Heart left ventricle (tissue), 16 donors: ENCODE measurements at regions of chr11 and their contacts with region 1.

Region 1: GRCh38 chr11:9363954-9364912 is 20.2 kb upstream of the IPO7 start:
- DNase-seq: peak; percentile 96 to 99 (median 97)
- ATAC-seq: peak; percentile 95 to 99 (median 99)
- H3K4me3 ChIP-seq: peak overlapping the region in 10 of 12 donors; percentile 39 to 65 (median 54)
- H3K27ac ChIP-seq: peak overlapping the region; percentile 91 to 100 (median 99)
- H3K4me1 ChIP-seq: peaks cover 0 to 25% (median 13%) of the 10 kb centered on the region in 12 donors
- H3K27me3 ChIP-seq: no peaks in the 10 kb centered on the region
- CTCF ChIP-seq: peak in 2 of 12 donors; percentile 6 to 7
- POLR2A ChIP-seq: peak in 1 of 2 donors; percentile 90

Region 2: GRCh38 chr11:9293646-9294045 is 70.6 kb before region 1 on chr11:
- intact Hi-C with region 1: no loop called
- DNase-seq: no peak
- ATAC-seq: no peak
- H3K4me3 ChIP-seq: no peak overlapping the region
- H3K27ac ChIP-seq: no peak overlapping the region
- H3K4me1 ChIP-seq: no peaks in the 10 kb centered on the region
- H3K27me3 ChIP-seq: no peaks in the 10 kb centered on the region
- CTCF ChIP-seq: no peak
- POLR2A ChIP-seq: no peak

Region 3: DNA sequence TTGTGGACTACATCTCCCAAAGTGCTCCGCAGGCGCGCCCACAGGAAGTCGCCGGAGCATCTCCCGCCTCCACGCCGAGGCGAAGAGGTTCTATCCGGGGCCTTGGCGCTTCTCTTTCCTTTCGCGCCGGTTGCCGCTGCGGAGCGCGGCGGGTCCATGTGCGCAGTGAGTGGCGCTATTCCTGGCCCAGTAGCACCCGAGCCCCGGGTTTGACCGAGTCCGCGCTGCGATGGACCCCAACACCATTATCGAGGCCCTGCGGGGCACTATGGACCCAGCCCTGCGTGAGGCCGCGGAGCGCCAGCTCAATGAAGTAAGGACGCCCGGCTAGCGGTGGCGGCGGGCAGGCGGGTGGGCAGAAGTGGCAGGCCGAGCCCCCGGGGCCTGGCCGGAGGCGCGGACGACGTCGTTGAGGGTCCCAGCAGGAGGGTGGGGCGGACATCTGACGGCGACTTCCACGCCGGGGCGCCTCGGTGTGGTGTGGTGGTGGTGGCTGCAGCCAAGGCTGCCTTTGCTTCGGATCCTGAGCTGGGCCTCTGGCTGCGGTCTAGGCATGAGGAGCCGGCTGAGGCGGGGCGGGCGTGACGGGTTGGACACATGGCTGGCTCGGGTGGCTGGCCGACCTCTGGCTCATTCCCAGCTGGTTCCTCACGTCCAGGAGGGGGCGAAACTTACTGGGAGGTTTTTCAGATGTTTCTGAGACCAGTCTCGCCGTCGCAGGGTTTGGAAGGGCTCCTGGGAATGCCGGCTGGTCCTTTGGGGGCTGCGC is 20.5 kb after region 1 on chr11 and contains the start of gene IPO7:
- intact Hi-C with region 1: loop called in 2 of 10 experiments (anchors 1 kb)
- DNase-seq: peak; percentile 90 to 95 (median 94)
- ATAC-seq: peak; percentile 92 to 97 (median 96)
- H3K4me3 ChIP-seq: peak within 1 kb of the TSS; percentile 74 to 96 (median 89)
- H3K27ac ChIP-seq: peak within 1 kb of the TSS; percentile 72 to 97 (median 95)
- H3K4me1 ChIP-seq: peaks cover 0 to 42% (median 20%) of the 10 kb centered on the region in 12 donors
- H3K27me3 ChIP-seq: no peaks in the 10 kb centered on the region
- CTCF ChIP-seq: peak in 6 of 12 donors; percentile 15 to 49 (median 35)
- POLR2A ChIP-seq: peak in 1 of 2 donors; percentile 77
- total RNA-seq, gene IPO7: 71.7 to 200 (median 141) TPM

Region 4: GRCh38 chr11:9460322-9461067 is 96.3 kb after region 1 on chr11 and contains the start of gene ZNF143:
- intact Hi-C with region 1: loop called in 1 of 10 experiments (anchors 2 kb)
- DNase-seq: peak; percentile 100
- ATAC-seq: peak; percentile 96 to 99 (median 98)
- H3K4me3 ChIP-seq: peak within 1 kb of the TSS; percentile 80 to 99 (median 91)
- H3K27ac ChIP-seq: peak within 1 kb of the TSS; percentile 98 to 100 (median 100)
- H3K4me1 ChIP-seq: peaks cover 0 to 27% (median 20%) of the 10 kb centered on the region in 12 donors
- H3K27me3 ChIP-seq: no peaks in the 10 kb centered on the region
- CTCF ChIP-seq: peak in 1 of 12 donors; percentile 3
- POLR2A ChIP-seq: peak; percentile 76 to 91
- total RNA-seq, gene ZNF143: 16.8 to 32.3 (median 22.0) TPM

Region 5: DNA sequence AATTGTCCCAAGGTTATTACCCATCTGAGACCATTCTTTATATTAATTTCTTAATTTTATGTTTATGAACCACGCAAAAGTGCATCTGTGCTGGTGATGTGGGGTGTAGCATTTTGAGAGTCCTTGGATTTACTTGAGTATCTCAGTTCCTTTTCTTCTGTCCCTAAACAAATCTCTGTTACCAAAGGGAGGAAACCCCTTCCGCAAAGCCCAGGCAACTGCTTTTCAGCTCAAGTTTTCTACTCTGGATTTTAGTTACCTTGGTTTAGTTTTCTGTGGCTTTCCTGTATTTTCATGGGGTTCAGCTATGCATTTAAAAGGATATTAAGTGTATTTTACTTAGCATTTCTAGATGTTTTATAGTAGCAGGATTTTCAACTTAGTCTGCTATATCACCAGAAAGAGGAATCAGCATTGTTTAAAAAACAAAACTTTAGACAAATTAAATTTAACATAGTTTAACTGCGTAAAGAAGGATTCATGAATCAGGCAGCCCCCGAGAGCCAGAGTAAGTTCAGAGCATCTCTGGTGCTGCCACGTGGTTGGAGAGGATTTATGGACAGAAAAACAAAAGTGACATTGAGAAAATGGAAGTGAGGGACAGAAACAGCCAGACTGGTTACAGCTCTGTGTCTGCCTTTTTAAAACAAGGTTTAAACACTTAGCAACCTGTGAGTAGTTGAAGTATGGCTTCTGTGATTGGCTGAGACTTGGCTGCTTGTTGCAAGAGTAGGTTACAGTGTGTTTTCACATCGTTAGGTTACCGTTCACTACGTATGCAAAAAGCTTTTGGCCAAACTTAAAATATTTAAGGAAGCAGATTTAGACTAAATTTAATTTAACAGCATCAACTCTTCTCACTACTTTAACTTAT is 950.2 kb after region 1 on chr11:
- intact Hi-C with region 1: loop called in 1 of 10 experiments (anchors 10 kb)
- DNase-seq: no peak
- ATAC-seq: peak; percentile 54 to 73 (median 68)
- H3K4me3 ChIP-seq: no peak overlapping the region
- H3K27ac ChIP-seq: no peak overlapping the region
- H3K4me1 ChIP-seq: peaks cover 0 to 24% (median 8%) of the 10 kb centered on the region in 12 donors
- H3K27me3 ChIP-seq: no peaks in the 10 kb centered on the region
- CTCF ChIP-seq: no peak
- POLR2A ChIP-seq: no peak